Activated CD8-positive, alpha-beta T cell treated with anti-CD3 and anti-CD28 coated beads for 36 hours (primary cell): ENCODE measurements at regions of chr10 and their contacts with region 1.

Region 1: DNA sequence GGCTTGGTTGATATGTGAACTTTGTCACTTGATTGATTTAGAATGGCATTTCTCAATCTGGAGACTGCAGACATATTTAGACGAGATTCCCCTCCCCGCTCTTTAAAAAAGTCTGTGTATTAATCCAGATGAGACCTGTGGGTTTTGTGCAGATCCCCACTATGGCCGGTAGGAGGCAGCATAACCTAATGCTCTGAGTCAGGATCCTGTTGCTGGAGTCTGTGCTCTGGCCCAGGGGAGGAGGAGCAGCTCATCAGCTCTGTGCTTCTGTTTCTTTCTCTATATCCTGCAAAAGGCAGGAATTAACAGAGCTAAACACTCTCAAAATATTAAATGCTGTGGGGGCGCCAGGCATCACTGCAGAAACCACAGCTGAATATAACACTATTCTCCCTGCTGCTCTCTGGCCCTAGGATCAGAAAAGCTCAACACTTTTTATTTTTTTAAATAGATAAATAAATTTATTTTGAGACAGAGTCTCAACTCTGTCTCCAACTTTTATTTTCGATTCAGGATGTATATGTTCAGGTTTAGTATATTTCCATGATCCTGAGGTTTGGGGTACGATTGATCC is 23.9 kb upstream of the SEPHS1 start:
- DNase-seq: peak; percentile 77
- ATAC-seq: peak; percentile 100
- H3K4me3 Mint-ChIP-seq: no peak overlapping the region
- H3K27ac Mint-ChIP-seq: no peak overlapping the region
- H3K4me1 Mint-ChIP-seq: no peaks in the 10 kb centered on the region
- H3K27me3 Mint-ChIP-seq: no peaks in the 10 kb centered on the region
- CTCF ChIP-seq: peak; percentile 88

Region 2: DNA sequence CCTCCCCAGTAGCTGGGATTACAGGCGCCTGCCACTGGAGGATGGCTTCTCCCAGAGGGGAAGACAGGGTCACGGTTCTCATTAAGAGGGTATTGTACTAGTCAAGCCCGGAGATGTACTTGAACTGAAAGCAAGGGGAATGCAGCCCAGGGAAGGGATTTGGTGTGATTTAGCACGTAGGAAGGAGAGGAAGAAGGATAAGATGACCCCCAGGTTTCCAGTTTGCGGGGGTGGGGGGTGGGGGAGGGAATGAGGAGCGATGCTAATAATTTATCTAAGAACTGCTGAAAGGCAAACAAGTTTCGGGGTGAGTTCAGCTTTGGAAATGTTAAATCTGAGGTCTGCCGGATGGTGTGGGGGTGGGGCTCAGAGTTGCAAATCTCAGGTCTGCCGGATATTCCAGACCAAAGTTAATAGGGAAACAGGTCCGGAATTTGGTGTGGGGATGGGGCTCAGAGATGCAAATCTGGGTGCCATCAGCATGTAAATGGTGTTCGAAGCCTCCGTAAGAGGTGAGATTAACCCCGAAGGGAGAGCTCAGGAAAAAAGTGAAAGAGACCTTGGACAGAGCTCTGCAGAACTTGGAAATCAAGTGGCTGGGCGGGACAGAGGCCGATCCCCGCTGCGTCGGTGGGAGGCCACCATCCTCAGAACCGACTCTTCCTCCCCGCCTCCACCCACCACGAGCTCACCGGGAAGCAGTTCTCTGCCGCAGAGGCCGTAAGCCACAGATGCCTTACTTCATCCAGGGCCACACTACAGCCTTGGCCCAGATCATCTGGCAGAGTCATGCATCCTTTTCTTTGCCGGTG is 22.3 kb before region 1 on chr10:
- CTCF ChIA-PET with region 1: interaction called, 24 read pairs
- POLR2A ChIA-PET with region 1: no interaction called
- intact Hi-C with region 1: no loop called
- DNase-seq: peak; percentile 66
- ATAC-seq: peak; percentile 7
- H3K4me3 Mint-ChIP-seq: peak overlapping the region; percentile 86
- H3K27ac Mint-ChIP-seq: peak overlapping the region; percentile 95
- H3K4me1 Mint-ChIP-seq: peaks cover 55% of the 10 kb centered on the region
- H3K27me3 Mint-ChIP-seq: no peaks in the 10 kb centered on the region
- CTCF ChIP-seq: no peak

Region 3: GRCh38 chr10:13382703-13383398 is 10.9 kb after region 1 on chr10:
- CTCF ChIA-PET with region 1: interaction called, 28 read pairs
- POLR2A ChIA-PET with region 1: no interaction called
- intact Hi-C with region 1: no loop called
- DNase-seq: no peak
- ATAC-seq: no peak
- H3K4me3 Mint-ChIP-seq: no peak overlapping the region
- H3K27ac Mint-ChIP-seq: no peak overlapping the region
- H3K4me1 Mint-ChIP-seq: peaks cover 9% of the 10 kb centered on the region
- H3K27me3 Mint-ChIP-seq: peaks cover 37% of the 10 kb centered on the region
- CTCF ChIP-seq: no peak

Region 4: DNA sequence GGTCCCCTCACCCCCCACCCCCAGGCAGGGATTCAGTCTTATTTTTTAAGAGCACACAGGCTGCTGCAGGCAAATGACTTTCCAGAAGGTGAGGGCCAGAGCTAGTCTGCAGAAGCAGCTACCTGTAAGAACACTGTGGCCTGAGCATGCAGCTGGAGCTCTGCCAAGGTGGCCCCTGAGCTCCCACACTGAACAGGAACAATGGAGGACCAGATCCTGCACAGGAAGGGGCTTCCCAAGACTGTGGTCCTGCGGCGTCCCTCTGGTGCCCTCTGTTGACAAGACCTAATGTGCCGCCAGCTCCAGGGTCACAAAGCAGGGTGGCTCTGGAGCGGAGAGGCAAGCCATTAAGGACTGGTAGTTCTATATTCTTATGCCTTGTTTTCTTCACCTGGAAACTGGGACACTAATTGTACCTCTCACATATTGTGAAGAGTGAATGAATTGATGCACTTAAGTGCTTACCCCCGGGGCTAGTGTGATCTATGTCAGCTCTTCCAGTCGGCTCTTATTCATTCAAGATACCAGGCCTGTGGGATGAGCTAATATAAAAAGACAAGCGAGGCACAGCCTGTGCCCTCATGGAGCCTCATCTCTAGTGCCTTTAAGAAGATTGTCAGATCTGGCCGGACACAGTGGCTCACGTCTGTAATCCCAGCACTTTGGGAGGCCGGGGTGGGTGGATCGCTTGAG is 164.8 kb after region 1 on chr10:
- CTCF ChIA-PET with region 1: interaction called, 20 read pairs
- POLR2A ChIA-PET with region 1: no interaction called
- intact Hi-C with region 1: loop called (anchors 5 kb)
- DNase-seq: peak; percentile 61
- ATAC-seq: peak; percentile 78
- H3K4me3 Mint-ChIP-seq: no peak overlapping the region
- H3K27ac Mint-ChIP-seq: no peak overlapping the region
- H3K4me1 Mint-ChIP-seq: no peaks in the 10 kb centered on the region
- H3K27me3 Mint-ChIP-seq: peaks cover 33% of the 10 kb centered on the region
- CTCF ChIP-seq: peak; percentile 44